Pancreas (tissue), 10 donors: ENCODE measurements at regions of chr19 and their contacts with region 1.

Region 1: DNA sequence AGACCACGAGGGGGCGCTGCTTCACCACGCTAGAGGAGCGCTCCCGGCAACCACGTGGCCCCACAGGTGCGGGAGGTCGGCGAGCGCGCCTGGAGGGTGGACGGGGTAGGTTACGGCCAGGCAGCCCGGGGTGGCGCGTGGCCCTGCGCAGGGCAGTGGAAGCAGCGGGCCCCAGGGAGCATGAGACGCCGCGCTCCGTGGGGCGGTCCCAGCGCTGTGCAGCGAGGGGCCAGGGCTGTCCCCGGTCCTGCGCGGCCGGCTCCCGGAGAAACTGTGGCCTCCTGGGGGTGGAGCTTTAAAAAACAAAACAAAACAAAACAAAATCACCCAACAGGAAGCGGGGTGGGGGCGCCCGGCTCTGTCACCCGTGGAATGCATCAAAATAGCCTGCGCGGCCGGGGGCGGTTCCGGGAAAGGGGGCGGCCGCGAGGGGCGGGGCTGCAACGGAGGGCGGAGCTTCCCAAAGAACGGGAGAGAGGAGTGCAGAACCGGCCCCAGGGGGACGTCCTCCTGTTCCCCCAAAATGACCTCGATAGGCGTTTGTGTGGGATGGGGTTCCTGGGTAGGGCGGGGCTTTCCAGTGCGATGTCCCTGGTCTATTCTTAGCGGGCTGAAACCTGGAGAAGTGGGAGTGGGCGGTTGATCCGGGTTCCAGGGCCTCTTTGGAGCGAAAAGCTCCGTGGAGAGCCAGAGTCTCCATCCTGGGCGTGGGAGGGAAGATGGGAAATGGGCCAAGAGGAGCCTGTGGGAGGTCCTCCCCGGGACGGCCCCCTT is 27.3 kb downstream of the NUMBL start:
- DNase-seq: peak; percentile 84 to 99 (median 93)
- ATAC-seq: peak; percentile 93 to 95 (median 94)
- H3K4me3 ChIP-seq: peak overlapping the region; percentile 44 to 80 (median 56)
- H3K27ac ChIP-seq: peak overlapping the region; percentile 71 to 81 (median 76)
- H3K4me1 ChIP-seq: no peaks in the 10 kb centered on the region
- H3K27me3 ChIP-seq: peaks cover 0 to 4% (median 0%) of the 10 kb centered on the region in 4 donors
- CTCF ChIP-seq: peak in 3 of 4 donors; percentile 95 to 98 (median 97)

Region 2: GRCh38 chr19:40777937-40778705 is 115.0 kb after region 1 on chr19 and contains the start of gene RAB4B:
- intact Hi-C with region 1: no loop called
- DNase-seq: peak; percentile 99 to 100 (median 100)
- ATAC-seq: peak; percentile 92 to 96 (median 94)
- H3K4me3 ChIP-seq: peak within 1 kb of the TSS; percentile 31 to 78 (median 68)
- H3K27ac ChIP-seq: peak within 1 kb of the TSS; percentile 93 to 98 (median 95)
- H3K4me1 ChIP-seq: peaks cover 0 to 8% (median 0%) of the 10 kb centered on the region in 3 donors
- H3K27me3 ChIP-seq: no peaks in the 10 kb centered on the region
- CTCF ChIP-seq: no peak
- total RNA-seq, gene RAB4B: 5.0 to 18.9 (median 9.1) TPM

Region 3: DNA sequence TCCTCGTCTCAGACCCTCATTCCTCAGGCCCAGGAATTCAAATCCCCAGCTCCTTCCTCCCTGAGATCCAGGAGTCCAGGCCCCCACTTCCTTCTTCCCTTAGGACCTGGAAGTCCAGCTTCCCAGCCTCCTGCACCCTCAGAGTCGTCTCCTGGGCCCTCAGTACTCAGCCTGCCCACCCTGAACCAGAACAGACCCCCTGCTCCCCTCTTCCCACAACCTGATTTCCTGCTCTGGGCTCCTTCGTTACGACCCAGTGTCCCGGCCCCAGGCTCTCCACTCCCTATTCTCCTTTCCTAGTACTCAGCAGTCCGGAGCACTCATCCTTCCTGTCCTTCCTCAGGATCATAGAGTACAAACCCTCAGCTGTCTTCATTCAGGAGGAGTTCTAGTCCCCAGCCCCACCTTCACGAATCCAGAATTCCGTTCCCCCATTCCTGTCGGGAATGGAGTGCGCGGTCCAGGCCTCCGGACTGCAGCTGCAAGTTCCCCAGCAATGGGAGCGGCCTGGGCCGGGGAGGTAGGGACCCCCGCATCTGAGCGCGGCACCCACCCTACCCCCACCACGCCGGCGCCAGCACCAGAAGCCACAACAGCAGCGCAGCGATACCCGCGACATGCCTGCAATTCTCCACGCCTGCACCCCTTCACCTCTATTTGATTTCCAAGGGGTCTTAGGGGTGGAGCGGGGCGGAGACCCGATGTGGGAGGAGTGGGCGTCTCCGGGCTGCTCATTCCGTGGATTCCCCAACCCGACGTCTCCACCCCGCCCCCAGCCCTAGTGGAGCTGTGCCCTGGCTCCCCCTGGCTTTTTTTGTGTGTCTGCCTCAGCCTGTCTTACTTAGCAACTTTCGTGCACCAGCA is 148.6 kb after region 1 on chr19:
- intact Hi-C with region 1: loop called in 1 of 3 experiments (anchors 10 kb)
- DNase-seq: no peak
- ATAC-seq: no peak
- H3K4me3 ChIP-seq: peak overlapping the region in 2 of 4 donors; percentile 29 to 42
- H3K27ac ChIP-seq: peak overlapping the region in 1 of 4 donors; percentile 63
- H3K4me1 ChIP-seq: peaks cover 0 to 2% (median 0%) of the 10 kb centered on the region in 3 donors
- H3K27me3 ChIP-seq: no peaks in the 10 kb centered on the region
- CTCF ChIP-seq: no peak

Region 4: GRCh38 chr19:40862785-40863184 is 199.7 kb after region 1 on chr19:
- intact Hi-C with region 1: no loop called
- DNase-seq: no peak
- ATAC-seq: peak in 1 of 4 donors; percentile 18
- H3K4me3 ChIP-seq: no peak overlapping the region
- H3K27ac ChIP-seq: no peak overlapping the region
- H3K4me1 ChIP-seq: no peaks in the 10 kb centered on the region
- H3K27me3 ChIP-seq: no peaks in the 10 kb centered on the region
- CTCF ChIP-seq: no peak

Region 5: DNA sequence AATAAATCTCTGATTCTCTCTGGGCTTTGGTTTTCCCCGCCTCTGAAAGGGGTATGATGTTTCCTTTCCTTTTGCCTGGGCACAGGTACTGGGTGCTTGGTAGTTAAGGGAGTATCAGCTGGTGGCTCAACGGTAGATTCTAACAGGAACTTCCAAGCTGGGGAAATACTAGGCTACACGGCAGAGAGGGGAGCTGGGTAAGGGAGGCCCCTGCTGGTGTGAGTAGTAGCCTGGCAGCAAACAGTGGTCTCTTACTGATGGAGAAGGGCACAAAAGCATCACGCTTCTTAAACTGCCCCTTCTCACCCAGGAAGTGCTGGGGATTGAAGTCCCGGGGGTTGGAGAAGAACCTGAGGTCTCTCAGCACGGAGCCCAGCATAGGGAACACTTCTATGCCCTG is 245.9 kb after region 1 on chr19:
- intact Hi-C with region 1: loop called in 1 of 3 experiments (anchors 10 kb)
- DNase-seq: peak in 2 of 6 donors; percentile 23 to 55
- ATAC-seq: peak in 3 of 4 donors; percentile 36 to 93 (median 93)
- H3K4me3 ChIP-seq: peak overlapping the region in 1 of 4 donors; percentile 37
- H3K27ac ChIP-seq: no peak overlapping the region
- H3K4me1 ChIP-seq: no peaks in the 10 kb centered on the region
- H3K27me3 ChIP-seq: no peaks in the 10 kb centered on the region
- CTCF ChIP-seq: peak in 2 of 4 donors; percentile 19

Region 6: DNA sequence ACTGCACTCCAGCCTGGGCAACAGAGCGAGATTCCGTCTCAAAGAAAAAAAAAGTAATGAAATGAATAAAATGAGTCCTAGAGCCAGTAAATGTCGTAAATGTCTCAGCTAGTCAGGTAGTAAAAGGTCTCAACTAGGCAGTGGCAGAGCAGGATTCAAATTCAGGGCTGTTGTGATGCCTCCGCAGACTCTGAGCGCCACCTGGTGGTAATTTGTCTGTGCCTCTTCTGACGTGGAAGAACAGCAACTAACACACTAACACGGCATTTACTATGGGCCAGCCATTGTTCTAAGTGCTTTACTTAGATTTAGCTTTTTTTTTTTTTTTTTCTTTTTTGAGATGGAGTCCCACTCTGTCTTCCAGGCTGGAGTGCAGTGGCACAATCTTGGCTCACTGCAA is 481.3 kb after region 1 on chr19:
- intact Hi-C with region 1: loop called in 2 of 3 experiments (anchors 5 to 10 kb)
- DNase-seq: peak; percentile 58 to 82 (median 79)
- ATAC-seq: peak; percentile 74 to 98 (median 86)
- H3K4me3 ChIP-seq: no peak overlapping the region
- H3K27ac ChIP-seq: no peak overlapping the region
- H3K4me1 ChIP-seq: no peaks in the 10 kb centered on the region
- H3K27me3 ChIP-seq: peaks cover 0 to 13% (median 1%) of the 10 kb centered on the region in 4 donors
- CTCF ChIP-seq: peak; percentile 63 to 67 (median 65)